ENCODE measurements at regions of chr3 and their contacts with region 1.

Region 1: GRCh38 chr3:66816090-66816761 is 181.9 kb upstream of the KBTBD8 start:
- DNase-seq: no peak
- ATAC-seq: peak; percentile 94
- H3K4me3 ChIP-seq: no peak overlapping the region
- H3K27ac ChIP-seq: no peak overlapping the region
- H3K4me1 ChIP-seq: no peaks in the 10 kb centered on the region
- H3K27me3 ChIP-seq: no peaks in the 10 kb centered on the region
- CTCF ChIP-seq: peak; percentile 59

Region 2: GRCh38 chr3:66253790-66254620 is 562.2 kb before region 1 on chr3:
- intact Hi-C with region 1: loop called (anchors 10 kb)
- DNase-seq: no peak
- ATAC-seq: no peak
- H3K4me3 ChIP-seq: no peak overlapping the region
- H3K27ac ChIP-seq: no peak overlapping the region
- H3K4me1 ChIP-seq: no peaks in the 10 kb centered on the region
- H3K27me3 ChIP-seq: no peaks in the 10 kb centered on the region
- CTCF ChIP-seq: peak; percentile 88

Region 3: DNA sequence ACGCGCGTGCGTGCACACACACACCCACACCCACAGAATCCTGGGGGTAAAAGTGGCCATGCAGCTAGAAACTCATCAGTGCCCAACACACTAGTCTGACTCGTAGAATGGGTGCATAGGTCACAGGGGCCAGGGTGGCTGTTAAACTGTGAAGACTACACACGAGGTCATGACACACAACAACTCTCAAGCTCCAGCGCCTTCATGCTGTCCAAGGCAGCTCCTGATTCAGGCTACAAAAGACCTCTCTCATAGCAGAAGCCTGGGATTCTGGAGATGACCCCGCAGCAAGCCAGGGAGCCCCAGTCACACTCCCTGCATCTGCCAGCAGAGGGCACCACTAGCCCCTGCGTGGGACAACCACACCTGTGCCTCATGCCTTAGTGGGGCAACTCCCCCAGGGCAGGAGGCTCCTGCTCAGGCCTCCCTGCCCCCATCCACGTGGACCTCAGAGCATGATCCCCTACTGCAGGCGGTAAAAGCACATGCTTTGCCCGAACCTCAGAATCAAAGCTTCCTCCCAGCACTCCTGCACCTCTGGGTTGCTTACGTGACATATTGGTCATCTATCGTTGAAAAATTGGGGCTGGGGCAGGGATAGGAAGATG is 408.5 kb before region 1 on chr3:
- intact Hi-C with region 1: loop called (anchors 5 kb)
- DNase-seq: peak; percentile 83
- ATAC-seq: peak; percentile 89
- H3K4me3 ChIP-seq: no peak overlapping the region
- H3K27ac ChIP-seq: no peak overlapping the region
- H3K4me1 ChIP-seq: no peaks in the 10 kb centered on the region
- H3K27me3 ChIP-seq: no peaks in the 10 kb centered on the region
- CTCF ChIP-seq: peak; percentile 93

Region 4: GRCh38 chr3:66609659-66610561 is 206.3 kb before region 1 on chr3:
- intact Hi-C with region 1: no loop called
- DNase-seq: no peak
- ATAC-seq: no peak
- H3K4me3 ChIP-seq: no peak overlapping the region
- H3K27ac ChIP-seq: no peak overlapping the region
- H3K4me1 ChIP-seq: no peaks in the 10 kb centered on the region
- H3K27me3 ChIP-seq: no peaks in the 10 kb centered on the region
- CTCF ChIP-seq: no peak

Region 5: GRCh38 chr3:66948041-66948440 is 131.8 kb after region 1 on chr3:
- intact Hi-C with region 1: no loop called
- DNase-seq: no peak
- ATAC-seq: no peak
- H3K4me3 ChIP-seq: no peak overlapping the region
- H3K27ac ChIP-seq: no peak overlapping the region
- H3K4me1 ChIP-seq: no peaks in the 10 kb centered on the region
- H3K27me3 ChIP-seq: no peaks in the 10 kb centered on the region
- CTCF ChIP-seq: no peak

Region 6: DNA sequence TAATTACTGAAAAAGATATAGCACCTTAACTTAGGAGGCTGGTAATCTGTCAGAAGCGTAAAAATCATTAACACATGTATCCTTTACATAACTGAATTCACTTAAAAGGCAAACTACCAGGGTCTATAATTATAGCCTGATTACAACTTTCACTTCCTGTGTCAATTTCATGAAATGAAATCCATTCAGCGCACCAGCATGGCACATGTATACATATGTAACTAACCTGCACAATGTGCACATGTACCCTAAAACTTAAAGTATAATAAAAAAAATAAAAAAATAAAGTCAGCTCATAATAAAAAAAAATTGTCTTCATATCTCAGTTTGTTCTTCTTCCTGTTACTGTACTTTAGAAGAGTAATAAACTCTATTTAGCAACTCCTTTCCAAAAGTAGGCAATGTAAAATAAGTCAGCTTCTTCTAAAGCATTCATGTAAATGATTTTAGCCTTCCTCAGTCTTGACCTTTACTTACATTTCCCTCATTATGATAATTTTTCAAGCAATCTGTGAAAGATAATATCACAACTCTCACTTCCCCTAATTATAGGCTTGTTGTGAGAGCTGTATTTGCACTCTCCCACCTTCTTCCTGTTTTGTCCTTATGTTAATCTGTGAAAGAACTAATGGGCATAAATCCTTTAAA is 232.0 kb after region 1 on chr3:
- intact Hi-C with region 1: no loop called
- DNase-seq: no peak
- ATAC-seq: peak; percentile 70
- H3K4me3 ChIP-seq: no peak overlapping the region
- H3K27ac ChIP-seq: no peak overlapping the region
- H3K4me1 ChIP-seq: no peaks in the 10 kb centered on the region
- H3K27me3 ChIP-seq: no peaks in the 10 kb centered on the region
- CTCF ChIP-seq: no peak